Ascending aorta (tissue), 2 donors: ENCODE measurements at regions of chr3 and their contacts with region 1.

Region 1: GRCh38 chr3:12287727-12288191 is 1.1 kb upstream of the PPARG start:
- DNase-seq: no peak
- H3K4me3 ChIP-seq: peak overlapping the region; percentile 66 to 75
- H3K27ac ChIP-seq: peak overlapping the region; percentile 15 to 54
- H3K4me1 ChIP-seq: peaks cover 0 to 10% of the 10 kb centered on the region in 2 donors
- H3K27me3 ChIP-seq: peaks cover 3% of the 10 kb centered on the region
- CTCF ChIP-seq: no peak

Region 2: GRCh38 chr3:12143949-12144504 is 143.7 kb before region 1 on chr3:
- intact Hi-C with region 1: loop called (anchors 5 kb)
- DNase-seq: peak; percentile 70 to 97
- H3K4me3 ChIP-seq: peak overlapping the region in 1 of 2 donors; percentile 9
- H3K27ac ChIP-seq: peak overlapping the region; percentile 87 to 96
- H3K4me1 ChIP-seq: peaks cover 23 to 45% of the 10 kb centered on the region in 2 donors
- H3K27me3 ChIP-seq: no peaks in the 10 kb centered on the region
- CTCF ChIP-seq: peak in 1 of 3 experiments; percentile 15

Region 3: DNA sequence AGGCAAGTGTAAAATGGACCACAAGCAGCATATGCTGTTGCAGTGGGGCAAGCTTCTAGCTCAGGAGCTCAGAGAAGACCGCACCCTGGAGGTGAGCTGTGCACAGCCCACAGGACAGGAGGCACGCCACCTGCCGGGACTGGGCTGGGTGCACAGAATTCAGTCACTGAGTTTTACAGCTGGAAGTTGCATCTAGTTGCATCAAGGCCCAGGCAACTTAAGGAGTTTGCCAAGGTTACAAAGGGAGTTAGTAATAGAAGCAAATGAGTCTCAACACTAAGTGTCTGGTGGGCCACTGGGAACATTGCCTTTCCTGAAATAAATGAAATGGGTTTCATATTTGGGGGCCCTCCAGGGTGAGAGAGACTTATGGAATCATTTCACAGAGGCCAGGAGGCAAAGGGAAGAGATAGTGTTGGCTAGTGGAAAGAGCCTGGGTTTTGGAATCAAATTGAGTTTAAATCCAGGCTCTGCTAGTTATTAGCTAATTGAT is 93.0 kb before region 1 on chr3:
- intact Hi-C with region 1: loop called (anchors 5 kb)
- DNase-seq: no peak
- H3K4me3 ChIP-seq: no peak overlapping the region
- H3K27ac ChIP-seq: peak overlapping the region in 1 of 2 donors; percentile 88
- H3K4me1 ChIP-seq: peaks cover 10 to 23% of the 10 kb centered on the region in 2 donors
- H3K27me3 ChIP-seq: no peaks in the 10 kb centered on the region
- CTCF ChIP-seq: no peak